ENCODE measurements at regions of chr5 and their contacts with region 1.

Region 1: GRCh38 chr5:91101600-91102379 is 281.3 kb downstream of the ARRDC3 start:
- DNase-seq: peak; percentile 71 to 84
- H3K4me3 ChIP-seq: no peak overlapping the region
- H3K27ac ChIP-seq: peak overlapping the region; percentile 24 to 36
- H3K4me1 ChIP-seq: peaks cover 0 to 8% (median 0%) of the 10 kb centered on the region in 4 donors
- H3K27me3 ChIP-seq: no peaks in the 10 kb centered on the region
- CTCF ChIP-seq: peak; percentile 78 to 94

Region 2: DNA sequence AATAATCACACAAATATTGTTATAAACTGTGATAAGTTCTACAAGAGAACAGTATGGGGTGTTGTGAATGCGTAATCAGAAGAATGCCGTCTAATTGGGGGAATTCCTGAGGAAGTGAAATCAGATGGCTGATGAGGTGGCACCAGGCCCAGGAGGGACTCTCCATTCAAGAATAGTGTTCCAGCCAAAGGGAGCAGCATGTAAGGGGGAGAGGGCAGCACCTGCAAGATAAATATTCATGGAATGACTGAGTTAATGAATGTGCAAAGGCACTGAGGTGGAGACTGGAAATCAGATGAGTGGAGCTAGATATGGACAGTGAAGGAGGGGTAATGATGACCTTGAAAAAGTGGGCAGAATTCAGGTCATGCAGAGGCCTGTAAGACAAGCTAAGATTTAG is 30.8 kb after region 1 on chr5:
- intact Hi-C with region 1: no loop called
- DNase-seq: no peak
- H3K4me3 ChIP-seq: no peak overlapping the region
- H3K27ac ChIP-seq: no peak overlapping the region
- H3K4me1 ChIP-seq: peaks cover 0 to 27% (median 16%) of the 10 kb centered on the region in 4 donors
- H3K27me3 ChIP-seq: no peaks in the 10 kb centered on the region
- CTCF ChIP-seq: no peak

Region 3: DNA sequence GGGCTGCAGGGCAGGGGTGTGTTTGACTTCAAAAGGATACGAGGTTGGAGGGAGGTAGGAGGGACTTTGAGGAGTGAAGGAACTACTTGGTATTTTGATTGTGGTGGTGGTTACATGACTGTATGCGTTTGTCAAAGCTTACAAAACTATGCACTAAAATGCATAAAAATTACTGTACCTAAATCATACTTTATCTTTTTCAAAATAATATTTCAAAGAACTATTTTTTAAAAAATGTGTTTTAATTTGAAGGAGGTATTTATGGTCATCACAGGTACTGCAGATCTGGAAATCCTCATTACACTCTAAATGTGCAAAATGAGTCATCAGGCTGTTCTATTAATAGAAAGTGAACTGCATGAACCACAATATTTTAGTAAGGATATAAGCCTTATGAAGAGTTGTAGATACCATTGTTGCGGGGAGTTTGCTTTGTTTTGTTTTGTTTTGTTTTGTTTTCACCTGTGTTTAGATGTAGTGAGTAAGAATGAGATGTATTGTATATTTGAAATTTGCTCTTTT is 164.5 kb after region 1 on chr5:
- intact Hi-C with region 1: loop called (anchors 10 kb)
- DNase-seq: no peak
- H3K4me3 ChIP-seq: no peak overlapping the region
- H3K27ac ChIP-seq: no peak overlapping the region
- H3K4me1 ChIP-seq: peaks cover 0 to 13% (median 6%) of the 10 kb centered on the region in 4 donors
- H3K27me3 ChIP-seq: no peaks in the 10 kb centered on the region
- CTCF ChIP-seq: peak in 1 of 2 experiments; percentile 34

Measured in tibial artery (tissue), 4 donors.